ENCODE measurements at regions of chr4 and their contacts with region 1.

Region 1: GRCh38 chr4:185290018-185290607 is 80.7 kb downstream of the SNX25 start:
- DNase-seq: no peak
- H3K4me3 ChIP-seq: no peak overlapping the region
- H3K27ac ChIP-seq: no peak overlapping the region
- H3K4me1 ChIP-seq: no peaks in the 10 kb centered on the region
- H3K27me3 ChIP-seq: no peaks in the 10 kb centered on the region
- CTCF ChIP-seq: no peak

Region 2: GRCh38 chr4:185346975-185347601 is 57.0 kb after region 1 on chr4:
- CTCF ChIA-PET with region 1: interaction called, 17 read pairs
- dilution Hi-C with region 1: no loop called
- in situ Hi-C with region 1: no loop called
- intact Hi-C with region 1: no loop called
- DNase-seq: no peak
- H3K4me3 ChIP-seq: no peak overlapping the region
- H3K27ac ChIP-seq: no peak overlapping the region
- H3K4me1 ChIP-seq: peaks cover 6% of the 10 kb centered on the region
- H3K27me3 ChIP-seq: no peaks in the 10 kb centered on the region
- CTCF ChIP-seq: no peak

Measured in mammary epithelial cell (primary cell).